Cardiac septum (tissue), 1 donor: ENCODE measurements at regions of chr11 and their contacts with region 1.

Region 1: DNA sequence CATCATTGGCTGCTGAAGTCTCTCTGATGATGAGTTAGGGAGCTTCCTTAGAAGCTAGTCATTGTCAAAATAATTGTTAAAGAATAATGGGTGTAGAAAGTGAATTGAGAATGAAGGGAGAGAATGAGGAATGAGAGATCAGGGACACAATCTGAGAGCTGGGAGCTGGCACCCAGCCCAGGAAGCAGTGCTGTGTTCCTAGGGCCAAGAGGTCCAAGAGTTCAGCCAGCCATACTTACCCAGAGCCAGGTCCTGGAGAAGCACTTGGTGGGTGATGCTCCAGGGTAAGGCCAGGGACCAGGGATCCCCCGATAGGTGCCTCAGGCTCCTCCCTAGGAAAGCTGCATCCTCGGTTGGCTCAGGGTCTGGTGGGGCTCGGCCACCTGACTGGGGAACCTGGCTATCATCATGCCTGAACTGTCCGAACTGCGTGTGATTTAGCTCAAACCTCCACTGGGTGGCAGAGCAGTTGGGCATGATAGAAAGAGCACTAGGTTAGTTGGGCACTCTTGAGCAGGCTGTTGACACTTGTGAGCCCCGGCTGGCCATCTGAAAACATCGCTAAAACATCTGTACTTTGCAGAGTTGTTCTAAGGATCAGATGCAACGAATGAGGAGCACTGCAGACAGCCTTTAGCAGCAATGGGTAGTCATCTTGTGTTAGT is 123.9 kb upstream of the NCAM1 start:
- DNase-seq: no peak

Region 2: GRCh38 chr11:112401036-112401769 is 436.1 kb before region 1 on chr11:
- intact Hi-C with region 1: no loop called
- DNase-seq: no peak

Region 3: GRCh38 chr11:112784323-112785073 is 52.8 kb before region 1 on chr11:
- intact Hi-C with region 1: loop called (anchors 2 kb)
- DNase-seq: peak; percentile 89

Region 4: GRCh38 chr11:113113801-113114706 is 276.8 kb after region 1 on chr11:
- intact Hi-C with region 1: loop called (anchors 10 kb)
- DNase-seq: no peak